Calu3 (cell line): ENCODE measurements at regions of chr18 and their contacts with region 1.

Region 1: GRCh38 chr18:73679941-73680712 is 467.5 kb downstream of the FBXO15 start:
- DNase-seq: no peak
- H3K4me3 Mint-ChIP-seq: no peak overlapping the region
- H3K27ac Mint-ChIP-seq: no peak overlapping the region
- H3K4me1 Mint-ChIP-seq: peaks cover 29% of the 10 kb centered on the region
- H3K27me3 Mint-ChIP-seq: no peaks in the 10 kb centered on the region
- CTCF ChIP-seq: no peak

Region 2: DNA sequence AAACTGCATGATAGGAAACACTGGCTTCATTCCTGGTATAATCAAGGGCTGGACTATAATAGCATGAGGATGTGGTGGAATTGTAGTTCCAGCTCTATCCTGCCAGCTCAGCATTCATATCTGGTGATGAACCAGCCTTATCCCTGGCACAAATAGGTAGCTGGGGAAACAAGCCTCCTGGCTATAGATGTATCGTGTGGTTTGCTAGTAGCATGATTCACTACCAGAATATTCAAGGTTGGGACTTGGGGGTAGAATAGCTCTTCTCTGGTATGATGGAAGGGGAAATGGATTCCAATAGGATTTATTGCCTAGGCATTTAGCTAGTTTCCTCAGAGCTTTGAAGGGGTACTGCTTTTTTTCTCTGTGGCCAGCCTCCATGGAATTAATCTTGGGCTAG is 65.3 kb before region 1 on chr18:
- CTCF ChIA-PET with region 1: no interaction called
- intact Hi-C with region 1: loop called (anchors 5 kb)
- DNase-seq: peak; percentile 23
- H3K4me3 Mint-ChIP-seq: no peak overlapping the region
- H3K27ac Mint-ChIP-seq: no peak overlapping the region
- H3K4me1 Mint-ChIP-seq: peaks cover 13% of the 10 kb centered on the region
- H3K27me3 Mint-ChIP-seq: no peaks in the 10 kb centered on the region
- CTCF ChIP-seq: no peak

Region 3: DNA sequence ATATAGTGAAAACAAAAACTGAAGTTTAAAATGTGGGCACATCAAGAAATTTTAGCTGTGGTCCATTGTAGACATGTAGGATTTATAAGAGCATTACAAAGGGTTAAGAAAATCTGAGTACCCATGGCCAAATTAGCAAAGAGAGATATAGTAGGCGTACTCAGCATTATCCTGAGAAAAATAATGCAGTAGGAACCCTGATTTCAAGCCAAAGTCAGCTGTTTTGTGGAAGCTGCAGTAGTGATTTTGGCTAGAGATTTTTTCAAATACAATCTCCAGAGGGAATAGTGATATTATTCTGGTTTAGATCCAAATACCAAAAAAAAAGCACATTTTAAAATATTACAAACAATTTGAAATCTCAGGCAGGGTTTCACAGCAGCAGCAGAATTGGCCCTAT is 16.6 kb after region 1 on chr18:
- CTCF ChIA-PET with region 1: interaction called, 4 read pairs
- intact Hi-C with region 1: loop called (anchors 2 kb)
- DNase-seq: no peak
- H3K4me3 Mint-ChIP-seq: no peak overlapping the region
- H3K27ac Mint-ChIP-seq: no peak overlapping the region
- H3K4me1 Mint-ChIP-seq: peaks cover 6% of the 10 kb centered on the region
- H3K27me3 Mint-ChIP-seq: no peaks in the 10 kb centered on the region
- CTCF ChIP-seq: no peak